SK-N-SH (cell line): ENCODE measurements at regions of chr17 and their contacts with region 1.

Region 1: DNA sequence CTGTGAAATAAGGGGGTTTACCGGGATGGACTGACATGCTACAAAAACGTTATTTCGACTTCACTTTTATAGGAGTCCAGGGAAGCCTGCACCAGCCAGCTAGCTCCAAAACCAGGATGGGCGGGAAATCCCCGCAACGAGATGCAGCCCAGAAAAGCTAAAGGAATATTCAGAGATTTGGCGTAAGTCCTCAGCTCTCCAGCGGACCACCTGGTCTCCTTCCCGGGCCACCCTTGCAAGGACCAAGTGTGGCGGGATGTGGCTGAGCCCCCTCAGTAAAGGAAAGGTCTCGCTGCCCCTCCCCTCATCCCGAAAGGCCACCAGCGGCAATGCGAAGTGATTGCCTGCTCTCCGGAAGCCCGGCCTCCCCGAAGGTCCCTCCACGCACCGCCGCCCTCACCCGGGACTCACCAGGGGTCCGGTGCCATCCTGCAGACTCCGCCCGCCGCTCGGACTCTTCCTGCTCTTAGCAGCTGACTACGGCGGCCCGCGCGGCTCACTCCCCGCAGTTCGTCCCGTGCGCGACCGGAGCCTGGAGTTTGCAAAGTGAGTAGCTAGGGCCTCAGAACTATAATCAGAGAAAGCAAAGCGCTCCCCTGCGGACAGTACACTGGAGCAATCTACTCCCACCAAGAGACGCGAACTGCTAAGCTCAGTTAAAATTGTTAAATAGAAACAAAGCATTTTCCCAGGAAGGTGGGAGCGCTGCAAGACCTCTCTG is at the start of gene STX8:
- DNase-seq: peak; percentile 86
- H3K4me3 ChIP-seq: peak within 1 kb of the TSS; percentile 89 to 94
- H3K27ac ChIP-seq: peak within 1 kb of the TSS; percentile 38 to 61; a peak in 3 of 4 replicates
- H3K4me1 ChIP-seq: peaks cover 0 to 10% of the 10 kb centered on the region in 2 experiments; a peak in 2 of 4 replicates
- H3K27me3 ChIP-seq: no peaks in the 10 kb centered on the region
- CTCF ChIP-seq: no peak
- EP300 ChIP-seq: no peak; a peak in 1 of 4 replicates
- RAD21 ChIP-seq: no peak
- polyA plus RNA-seq, gene STX8: 51.3 and 53.3 TPM in 2 replicates

Region 2: GRCh38 chr17:9557161-9557755 is 18.3 kb before region 1 on chr17:
- CTCF ChIA-PET with region 1: interaction called, 10 read pairs
- POLR2A ChIA-PET with region 1: interaction called, 3 read pairs
- DNase-seq: no peak
- H3K4me3 ChIP-seq: no peak overlapping the region
- H3K27ac ChIP-seq: no peak overlapping the region
- H3K4me1 ChIP-seq: no peaks in the 10 kb centered on the region
- H3K27me3 ChIP-seq: no peaks in the 10 kb centered on the region
- CTCF ChIP-seq: no peak
- EP300 ChIP-seq: no peak
- RAD21 ChIP-seq: no peak

Region 3: DNA sequence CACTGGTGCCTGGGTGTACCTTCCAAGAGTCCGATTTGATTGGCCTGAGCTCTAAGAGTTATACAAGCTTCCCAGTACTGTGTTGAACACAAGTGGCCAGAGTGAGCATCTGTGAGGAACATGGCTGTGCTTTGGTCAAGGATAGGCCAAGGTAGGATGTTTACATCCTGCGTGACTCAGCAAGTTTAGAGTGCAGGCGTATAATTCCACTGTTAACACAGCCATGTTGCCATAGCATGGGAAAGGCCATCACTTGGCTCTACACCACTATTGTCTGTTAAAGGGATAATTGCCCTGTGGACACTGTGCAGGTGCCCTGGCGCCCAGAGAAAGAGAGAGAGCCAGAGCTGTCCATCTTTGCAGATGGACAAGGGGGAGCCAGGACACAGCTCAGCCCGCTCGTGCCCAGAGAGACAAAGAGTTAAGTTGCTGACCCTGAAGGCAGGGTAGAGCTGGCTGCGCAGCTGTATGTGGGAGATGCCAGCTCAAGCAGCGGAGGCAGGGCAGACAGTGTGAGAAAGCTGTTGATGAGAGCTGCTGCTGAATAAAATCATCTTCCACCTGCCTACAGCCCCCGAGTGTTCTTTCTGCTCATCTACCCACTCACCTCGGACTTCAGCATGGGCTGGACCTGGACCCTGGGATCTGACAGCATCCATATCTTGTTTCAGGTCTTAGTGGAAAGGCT is 12.6 kb after region 1 on chr17:
- CTCF ChIA-PET with region 1: interaction called, 28 read pairs
- POLR2A ChIA-PET with region 1: no interaction called
- DNase-seq: no peak
- H3K4me3 ChIP-seq: no peak overlapping the region
- H3K27ac ChIP-seq: no peak overlapping the region
- H3K4me1 ChIP-seq: no peaks in the 10 kb centered on the region
- H3K27me3 ChIP-seq: peaks cover 8% of the 10 kb centered on the region; the same call in 1 of the 2 replicates
- CTCF ChIP-seq: no peak
- EP300 ChIP-seq: no peak
- RAD21 ChIP-seq: no peak

Region 4: DNA sequence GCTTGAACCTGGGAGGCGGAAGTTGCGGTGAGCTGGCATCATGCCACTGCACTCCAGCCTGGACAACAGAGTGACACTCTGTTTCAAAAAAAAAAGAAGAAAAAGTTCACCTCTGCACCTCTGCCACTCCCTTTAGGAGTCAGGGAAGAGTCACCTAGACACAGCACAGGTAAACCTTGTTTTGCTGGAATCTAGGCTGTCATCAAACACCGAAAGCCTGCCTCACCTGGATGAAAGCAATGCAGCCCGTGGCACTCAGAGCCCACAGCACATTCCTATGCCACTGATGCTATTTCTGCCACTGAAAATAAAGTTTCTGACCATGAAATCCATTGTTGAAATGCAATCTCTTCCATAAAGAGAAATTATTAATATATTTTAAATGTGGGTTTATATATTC is 23.1 kb after region 1 on chr17:
- CTCF ChIA-PET with region 1: interaction called, 16 read pairs
- POLR2A ChIA-PET with region 1: no interaction called
- DNase-seq: no peak
- H3K4me3 ChIP-seq: no peak overlapping the region
- H3K27ac ChIP-seq: no peak overlapping the region
- H3K4me1 ChIP-seq: no peaks in the 10 kb centered on the region
- H3K27me3 ChIP-seq: no peaks in the 10 kb centered on the region; the same call in 1 of the 2 replicates
- CTCF ChIP-seq: no peak
- EP300 ChIP-seq: no peak
- RAD21 ChIP-seq: no peak

Region 5: DNA sequence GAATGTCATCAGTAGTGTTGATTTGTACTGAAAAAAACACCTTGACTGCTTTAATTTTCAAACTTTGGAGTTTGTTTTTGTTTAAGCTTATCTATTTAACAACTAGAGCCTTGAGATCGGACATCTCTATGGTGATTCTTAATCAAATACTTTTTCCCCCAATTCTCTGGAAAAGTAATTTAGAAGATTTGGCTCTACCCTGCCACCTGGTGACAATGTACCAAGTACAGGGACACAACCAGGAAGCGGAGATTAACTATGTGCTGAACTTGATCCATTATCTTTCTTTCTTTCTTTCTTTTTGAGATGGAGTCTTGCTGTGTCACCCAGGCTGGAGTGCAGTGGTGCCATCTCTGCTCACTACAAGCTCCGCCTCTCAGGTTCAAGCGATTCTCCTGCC is 100.5 kb after region 1 on chr17:
- CTCF ChIA-PET with region 1: interaction called, 10 read pairs
- POLR2A ChIA-PET with region 1: no interaction called
- DNase-seq: no peak
- H3K4me3 ChIP-seq: no peak overlapping the region
- H3K27ac ChIP-seq: no peak overlapping the region
- H3K4me1 ChIP-seq: no peaks in the 10 kb centered on the region
- H3K27me3 ChIP-seq: peaks cover 16% of the 10 kb centered on the region
- CTCF ChIP-seq: peak; percentile 26
- EP300 ChIP-seq: no peak
- RAD21 ChIP-seq: no peak